ENCODE measurements at regions of chr4 and their contacts with region 1.

Region 1: DNA sequence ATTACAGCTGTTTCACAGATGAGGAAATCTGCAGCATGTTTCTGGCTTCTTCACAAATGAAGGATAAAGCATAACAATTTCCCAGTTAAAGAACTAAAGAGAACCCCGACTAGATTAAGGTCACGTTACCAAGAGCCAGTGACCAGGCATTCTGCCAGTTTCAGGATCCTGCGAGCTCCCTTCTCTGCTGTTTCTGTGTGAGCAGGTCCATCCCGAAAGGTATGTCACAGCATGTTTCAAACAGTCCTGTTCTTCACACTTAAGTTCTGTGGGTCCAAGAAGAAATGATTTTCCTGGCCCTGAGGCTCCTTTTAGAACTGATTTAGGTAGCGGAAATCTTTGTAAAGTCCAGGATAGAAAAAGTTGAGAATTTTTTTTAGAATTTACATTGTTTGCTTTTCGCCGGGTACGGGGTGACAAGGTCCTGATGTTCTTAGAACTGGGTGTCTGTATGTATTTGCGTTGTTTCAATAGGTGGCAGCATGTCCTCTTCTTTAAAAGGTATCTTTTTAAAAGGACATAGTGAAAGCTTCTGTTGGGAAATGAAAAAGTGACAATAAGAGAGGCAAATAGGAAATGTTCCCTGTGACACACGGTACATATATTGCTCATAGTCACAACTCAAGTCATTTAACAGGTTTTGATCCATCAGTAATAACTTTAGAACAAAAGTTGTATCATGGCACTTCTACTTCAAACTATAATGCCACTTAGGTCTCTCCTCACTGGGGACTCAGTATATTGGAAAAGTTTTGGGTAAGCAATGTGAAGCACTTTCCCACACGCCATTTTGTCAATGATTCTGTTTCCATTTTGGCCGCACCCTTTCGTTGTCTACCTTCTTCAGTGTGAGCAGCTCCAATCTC is 18.4 kb downstream of the IL21 start:
- DNase-seq: no peak
- H3K4me3 ChIP-seq: no peak overlapping the region
- H3K27ac ChIP-seq: no peak overlapping the region
- H3K4me1 ChIP-seq: no peaks in the 10 kb centered on the region
- H3K27me3 ChIP-seq: no peaks in the 10 kb centered on the region
- CTCF ChIP-seq: peak in 1 of 3 experiments; percentile 44

Region 2: DNA sequence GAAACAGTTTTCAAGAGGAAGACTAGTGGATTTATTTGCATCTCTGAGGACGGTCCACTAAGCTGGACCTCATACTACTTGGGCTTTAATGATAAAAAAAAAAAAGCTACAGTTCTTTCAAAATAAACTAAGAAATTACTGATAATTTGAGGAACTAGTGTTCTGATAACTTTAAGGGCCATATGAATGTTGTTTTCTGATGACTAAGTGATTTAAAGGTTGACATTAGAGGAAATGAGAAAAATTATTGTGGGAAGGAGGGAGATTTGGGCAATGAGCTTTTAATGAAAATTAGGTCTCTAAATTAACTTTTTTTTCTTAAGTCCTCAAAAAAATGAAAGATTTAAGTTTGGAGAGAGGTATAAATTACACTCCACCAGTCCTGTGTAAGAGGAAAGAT is 85.2 kb before region 1 on chr4:
- intact Hi-C with region 1: no loop called
- DNase-seq: no peak
- H3K4me3 ChIP-seq: no peak overlapping the region
- H3K27ac ChIP-seq: no peak overlapping the region
- H3K4me1 ChIP-seq: no peaks in the 10 kb centered on the region
- H3K27me3 ChIP-seq: no peaks in the 10 kb centered on the region
- CTCF ChIP-seq: no peak

Region 3: DNA sequence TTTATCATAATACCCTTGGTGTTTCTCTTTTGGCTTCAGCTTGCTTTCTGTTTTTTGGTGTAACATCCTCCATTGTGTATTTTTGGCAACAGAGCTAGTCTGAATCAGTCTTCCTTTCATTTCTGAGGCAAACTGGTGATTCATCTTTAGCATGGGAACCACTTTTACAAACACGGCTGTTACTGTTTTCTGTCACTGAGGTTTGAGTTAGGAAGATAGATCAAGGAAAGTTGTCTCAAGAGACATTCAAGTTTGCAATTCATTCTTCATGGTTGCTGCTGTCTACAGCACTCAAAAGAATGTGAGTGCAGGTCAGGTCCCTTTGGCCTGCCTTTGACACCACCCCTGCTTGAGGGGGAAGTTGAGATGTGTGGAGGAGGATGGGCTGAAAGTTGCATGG is 18.0 kb before region 1 on chr4:
- intact Hi-C with region 1: no loop called
- DNase-seq: no peak
- H3K4me3 ChIP-seq: no peak overlapping the region
- H3K27ac ChIP-seq: no peak overlapping the region
- H3K4me1 ChIP-seq: no peaks in the 10 kb centered on the region
- H3K27me3 ChIP-seq: no peaks in the 10 kb centered on the region
- CTCF ChIP-seq: no peak

Region 4: DNA sequence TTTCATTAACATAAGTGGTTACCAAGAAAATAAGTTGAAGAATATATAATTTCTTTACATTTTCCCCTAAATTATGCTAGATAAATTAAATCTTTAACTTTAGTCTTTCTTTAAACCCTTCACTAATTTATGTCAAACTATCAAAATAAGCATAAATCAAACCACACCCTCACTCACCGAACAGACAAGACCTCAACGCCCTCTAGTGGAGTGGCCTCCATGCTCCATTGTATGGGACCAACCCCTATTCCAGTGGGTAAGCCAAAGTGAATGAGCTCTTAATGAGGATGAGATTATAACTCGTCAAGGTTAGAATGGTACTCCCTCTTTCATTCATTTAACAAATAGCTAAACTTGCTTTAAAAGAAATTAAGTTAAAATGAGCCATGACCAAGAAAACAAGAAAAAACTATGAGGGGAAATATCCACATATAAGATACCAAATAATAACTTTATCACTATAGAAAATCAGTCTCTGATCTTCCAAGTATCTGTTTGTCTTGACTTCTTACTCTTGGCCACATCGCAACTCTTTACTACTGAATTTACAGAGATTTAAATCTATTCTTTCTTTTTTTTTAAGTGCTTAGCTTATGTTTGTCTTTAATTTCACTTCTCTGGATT is 114.4 kb after region 1 on chr4:
- intact Hi-C with region 1: loop called (anchors 2 kb)
- DNase-seq: peak in 1 of 2 donors; percentile 81
- H3K4me3 ChIP-seq: no peak overlapping the region
- H3K27ac ChIP-seq: no peak overlapping the region
- H3K4me1 ChIP-seq: no peaks in the 10 kb centered on the region
- H3K27me3 ChIP-seq: no peaks in the 10 kb centered on the region
- CTCF ChIP-seq: peak; percentile 47 to 76 (median 73)

Region 5: DNA sequence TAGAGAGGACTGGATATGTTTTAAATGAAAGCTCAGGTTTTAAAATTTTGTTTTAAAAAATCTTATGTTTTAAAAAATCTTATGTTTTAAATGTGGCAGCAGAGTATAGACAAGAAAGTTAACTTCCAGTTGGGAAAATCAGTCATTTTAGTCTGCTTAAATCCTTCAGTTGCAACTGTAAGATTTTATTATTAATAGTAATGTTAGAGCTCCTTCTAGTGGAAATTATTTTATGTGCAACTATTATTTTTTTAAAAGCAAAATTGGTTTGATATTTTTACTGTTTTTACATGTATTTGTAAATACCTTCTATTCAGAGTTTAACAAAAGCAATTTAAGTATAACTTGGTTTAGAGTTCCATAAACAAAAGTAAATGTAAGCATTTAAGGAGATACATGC is 328.4 kb after region 1 on chr4:
- intact Hi-C with region 1: loop called (anchors 5 kb)
- DNase-seq: no peak
- H3K4me3 ChIP-seq: no peak overlapping the region
- H3K27ac ChIP-seq: no peak overlapping the region
- H3K4me1 ChIP-seq: no peaks in the 10 kb centered on the region
- H3K27me3 ChIP-seq: no peaks in the 10 kb centered on the region
- CTCF ChIP-seq: peak in 2 of 3 experiments; percentile 55 to 64